ENCODE measurements at regions of chr3 and their contacts with region 1.

Region 1: DNA sequence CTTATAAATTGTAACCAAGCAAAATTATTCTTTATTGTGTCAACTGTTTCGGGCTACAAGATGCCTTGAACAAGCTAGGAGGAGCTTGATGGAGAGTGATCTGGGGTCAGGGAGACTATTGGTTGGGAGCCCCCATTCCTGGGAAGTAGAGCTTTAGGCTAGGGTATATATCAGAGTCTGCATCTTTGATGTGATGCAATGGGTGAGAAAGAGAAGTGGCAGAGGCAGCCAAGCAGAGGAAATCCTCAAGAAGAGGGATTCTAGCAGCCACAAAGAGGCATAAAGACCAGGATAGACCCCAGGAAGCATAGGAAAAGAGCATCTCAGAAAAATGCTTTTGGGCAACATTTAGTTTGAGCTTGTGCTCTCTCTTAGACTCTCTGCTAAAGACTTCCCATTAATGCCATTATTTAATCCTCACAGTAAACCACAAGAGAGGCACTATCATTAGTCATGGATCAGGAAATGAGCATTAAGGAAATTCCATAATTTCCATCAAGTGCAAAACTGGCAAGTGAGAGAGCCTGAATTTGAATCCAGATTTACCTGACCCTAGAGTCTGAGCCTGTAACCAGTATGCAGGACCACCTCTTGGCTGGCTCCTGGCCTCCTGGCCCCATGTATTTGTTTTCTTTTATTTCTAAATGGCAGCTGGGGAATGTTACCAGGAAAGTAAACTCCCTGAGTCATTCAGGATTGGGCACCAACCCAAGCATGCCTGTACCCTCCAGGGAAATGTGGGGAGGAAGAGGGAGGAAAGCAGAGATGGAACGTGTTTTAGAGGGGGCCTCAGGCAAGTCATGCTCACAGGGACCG is 118.7 kb downstream of the RPL22L1 start:
- DNase-seq: peak in 1 of 2 donors; percentile 92
- H3K4me3 ChIP-seq: no peak overlapping the region
- H3K27ac ChIP-seq: peak overlapping the region; percentile 57 to 68
- H3K4me1 ChIP-seq: peaks cover 8 to 45% of the 10 kb centered on the region in 2 donors
- H3K27me3 ChIP-seq: no peaks in the 10 kb centered on the region
- CTCF ChIP-seq: no peak

Region 2: GRCh38 chr3:169886671-169887070 is 864.6 kb before region 1 on chr3:
- intact Hi-C with region 1: no loop called
- DNase-seq: peak in 1 of 2 donors; percentile 80
- H3K4me3 ChIP-seq: no peak overlapping the region
- H3K27ac ChIP-seq: no peak overlapping the region
- H3K4me1 ChIP-seq: peaks cover 0 to 3% of the 10 kb centered on the region in 2 donors
- H3K27me3 ChIP-seq: no peaks in the 10 kb centered on the region
- CTCF ChIP-seq: no peak

Region 3: DNA sequence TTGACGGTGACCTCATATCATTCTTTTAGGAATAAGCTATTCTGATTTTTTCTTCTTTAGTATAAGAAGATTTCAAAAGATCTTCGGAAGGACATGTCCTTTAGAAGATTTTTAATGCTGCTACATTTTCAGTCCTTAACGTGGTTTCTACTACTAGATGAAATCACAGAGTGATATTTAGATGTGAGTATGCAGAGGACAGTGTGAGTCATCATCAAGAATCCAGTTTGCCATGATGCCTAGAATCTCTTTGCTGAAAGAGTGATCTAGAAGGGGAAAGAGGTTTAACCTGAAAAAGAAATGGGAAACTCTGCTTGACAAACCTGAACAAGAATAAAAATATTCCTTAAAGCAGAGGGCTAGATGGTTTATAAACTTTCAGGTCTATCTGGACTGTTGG is 208.6 kb before region 1 on chr3:
- intact Hi-C with region 1: no loop called
- DNase-seq: no peak
- H3K4me3 ChIP-seq: no peak overlapping the region
- H3K27ac ChIP-seq: no peak overlapping the region
- H3K4me1 ChIP-seq: no peaks in the 10 kb centered on the region
- H3K27me3 ChIP-seq: no peaks in the 10 kb centered on the region
- CTCF ChIP-seq: no peak

Region 4: GRCh38 chr3:170689893-170690660 is 61.2 kb before region 1 on chr3:
- intact Hi-C with region 1: loop called (anchors 5 kb)
- DNase-seq: peak in 1 of 2 donors; percentile 66
- H3K4me3 ChIP-seq: no peak overlapping the region
- H3K27ac ChIP-seq: peak overlapping the region; percentile 50 to 69
- H3K4me1 ChIP-seq: peaks cover 3 to 11% of the 10 kb centered on the region in 2 donors
- H3K27me3 ChIP-seq: no peaks in the 10 kb centered on the region
- CTCF ChIP-seq: peak in 2 of 3 experiments; percentile 29 to 48

Measured in ascending aorta (tissue), 2 donors.